Activated naive CD4-positive, alpha-beta T cell treated with anti-CD3 and anti-CD28 coated beads for 36 hours (primary cell): ENCODE measurements at regions of chr2 and their contacts with region 1.

Region 1: DNA sequence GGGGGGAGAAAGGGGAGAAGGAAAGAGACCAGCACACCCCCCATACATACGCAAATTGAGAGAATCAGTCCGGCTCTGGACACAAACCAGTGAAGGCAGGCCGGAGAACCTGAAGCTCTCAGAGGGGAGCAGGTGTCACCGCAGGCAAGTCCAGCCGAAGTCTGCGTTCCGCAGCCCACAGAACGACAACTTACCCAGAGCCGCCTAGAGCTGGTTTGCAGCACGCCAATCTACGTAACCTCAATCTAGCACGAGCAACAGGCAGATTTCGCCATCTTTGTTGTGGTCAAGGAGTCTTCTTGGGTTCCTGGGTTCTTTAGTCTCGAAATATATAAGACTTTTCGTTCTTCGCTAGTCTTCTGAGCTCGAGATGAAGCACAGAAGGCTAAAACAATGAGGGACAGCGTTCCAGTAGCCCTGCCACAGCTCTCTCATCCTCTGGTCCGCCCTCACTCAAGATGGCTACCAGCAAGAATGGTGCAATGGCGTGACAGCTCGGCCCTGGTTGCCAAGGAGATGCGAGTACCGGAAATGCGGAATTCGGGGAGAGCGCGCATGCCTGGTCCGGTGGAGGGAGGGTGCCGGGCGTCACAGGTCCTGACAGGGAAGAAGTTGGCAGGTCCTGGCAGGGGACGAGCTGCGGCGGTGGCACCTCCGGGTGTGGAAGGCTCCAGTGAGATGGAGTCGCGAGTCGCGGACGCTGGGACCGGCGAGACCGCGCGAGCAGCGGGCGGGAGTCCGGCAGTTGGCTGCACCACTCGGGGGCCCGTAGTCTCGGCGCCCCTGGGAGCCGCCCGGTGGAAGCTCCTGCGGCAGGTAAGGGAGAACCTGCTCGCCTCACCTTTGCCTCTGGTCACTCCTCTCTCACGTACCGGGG is at the starts of genes CAMKMT and PREPL:
- DNase-seq: peak; percentile 99
- H3K4me3 Mint-ChIP-seq: peak within 1 kb of the TSS; percentile 97
- H3K27ac Mint-ChIP-seq: peak within 1 kb of the TSS; percentile 99
- H3K4me1 Mint-ChIP-seq: peaks cover 42% of the 10 kb centered on the region
- H3K27me3 Mint-ChIP-seq: no peaks in the 10 kb centered on the region
- total RNA-seq, gene CAMKMT: 12.8 to 19.6 TPM
- total RNA-seq, gene PREPL: 27.8 to 29.6 TPM

Region 2: GRCh38 chr2:43637030-43637803 is 724.4 kb before region 1 on chr2 and contains the start of gene PLEKHH2:
- CTCF ChIA-PET with region 1: no interaction called
- intact Hi-C with region 1: loop called (anchors 2 kb)
- DNase-seq: peak; percentile 92
- H3K4me3 Mint-ChIP-seq: peak within 1 kb of the TSS; percentile 79
- H3K27ac Mint-ChIP-seq: no peak within 1 kb of the TSS
- H3K4me1 Mint-ChIP-seq: peaks cover 5% of the 10 kb centered on the region
- H3K27me3 Mint-ChIP-seq: peaks cover 19% of the 10 kb centered on the region
- total RNA-seq, gene PLEKHH2: 0.64 to 0.72 TPM

Region 3: GRCh38 chr2:43787895-43788294 is 573.7 kb before region 1 on chr2:
- CTCF ChIA-PET with region 1: no interaction called
- intact Hi-C with region 1: loop called (anchors 10 kb)
- DNase-seq: no peak
- H3K4me3 Mint-ChIP-seq: peak overlapping the region; percentile 4
- H3K27ac Mint-ChIP-seq: peak overlapping the region; percentile 48
- H3K4me1 Mint-ChIP-seq: peaks cover 23% of the 10 kb centered on the region
- H3K27me3 Mint-ChIP-seq: no peaks in the 10 kb centered on the region

Region 4: GRCh38 chr2:43826305-43827250 is 535.0 kb before region 1 on chr2:
- CTCF ChIA-PET with region 1: no interaction called
- intact Hi-C with region 1: no loop called
- DNase-seq: no peak
- H3K4me3 Mint-ChIP-seq: no peak overlapping the region
- H3K27ac Mint-ChIP-seq: no peak overlapping the region
- H3K4me1 Mint-ChIP-seq: peaks cover 3% of the 10 kb centered on the region
- H3K27me3 Mint-ChIP-seq: peaks cover 28% of the 10 kb centered on the region

Region 5: GRCh38 chr2:44237221-44237620 is 124.3 kb before region 1 on chr2:
- CTCF ChIA-PET with region 1: no interaction called
- intact Hi-C with region 1: loop called (anchors 5 kb)
- DNase-seq: peak; percentile 40
- H3K4me3 Mint-ChIP-seq: no peak overlapping the region
- H3K27ac Mint-ChIP-seq: no peak overlapping the region
- H3K4me1 Mint-ChIP-seq: peaks cover 32% of the 10 kb centered on the region
- H3K27me3 Mint-ChIP-seq: no peaks in the 10 kb centered on the region

Region 6: DNA sequence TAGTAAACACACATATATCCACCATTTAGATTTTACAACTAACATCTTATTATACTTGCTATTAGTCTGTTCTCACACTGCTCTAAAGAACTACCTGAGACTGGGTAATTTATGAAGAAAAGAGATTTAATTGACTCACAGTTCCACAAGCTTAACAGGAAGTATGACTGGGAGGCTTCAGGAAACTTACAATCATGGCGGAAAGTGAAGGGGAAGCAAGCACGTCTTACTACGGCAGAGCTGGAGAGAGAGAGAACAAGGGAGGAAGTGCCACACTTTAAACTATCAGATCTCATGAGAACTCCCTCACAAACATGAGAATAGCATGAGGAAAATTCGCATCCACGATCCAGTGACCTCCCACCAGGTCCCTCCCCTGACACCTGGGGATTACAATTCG is 240.9 kb after region 1 on chr2:
- CTCF ChIA-PET with region 1: no interaction called
- intact Hi-C with region 1: no loop called
- DNase-seq: no peak
- H3K4me3 Mint-ChIP-seq: no peak overlapping the region
- H3K27ac Mint-ChIP-seq: no peak overlapping the region
- H3K4me1 Mint-ChIP-seq: no peaks in the 10 kb centered on the region
- H3K27me3 Mint-ChIP-seq: no peaks in the 10 kb centered on the region